ENCODE measurements at regions of chr12 and their contacts with region 1.

Region 1: GRCh38 chr12:54005853-54006686 is 2.7 kb upstream of the HOXC8 start:
- DNase-seq: peak; percentile 89
- H3K4me3 Mint-ChIP-seq: peak overlapping the region; percentile 68
- H3K27ac Mint-ChIP-seq: no peak overlapping the region
- H3K4me1 Mint-ChIP-seq: peaks cover 22% of the 10 kb centered on the region
- H3K27me3 Mint-ChIP-seq: peaks cover 91% of the 10 kb centered on the region

Region 2: DNA sequence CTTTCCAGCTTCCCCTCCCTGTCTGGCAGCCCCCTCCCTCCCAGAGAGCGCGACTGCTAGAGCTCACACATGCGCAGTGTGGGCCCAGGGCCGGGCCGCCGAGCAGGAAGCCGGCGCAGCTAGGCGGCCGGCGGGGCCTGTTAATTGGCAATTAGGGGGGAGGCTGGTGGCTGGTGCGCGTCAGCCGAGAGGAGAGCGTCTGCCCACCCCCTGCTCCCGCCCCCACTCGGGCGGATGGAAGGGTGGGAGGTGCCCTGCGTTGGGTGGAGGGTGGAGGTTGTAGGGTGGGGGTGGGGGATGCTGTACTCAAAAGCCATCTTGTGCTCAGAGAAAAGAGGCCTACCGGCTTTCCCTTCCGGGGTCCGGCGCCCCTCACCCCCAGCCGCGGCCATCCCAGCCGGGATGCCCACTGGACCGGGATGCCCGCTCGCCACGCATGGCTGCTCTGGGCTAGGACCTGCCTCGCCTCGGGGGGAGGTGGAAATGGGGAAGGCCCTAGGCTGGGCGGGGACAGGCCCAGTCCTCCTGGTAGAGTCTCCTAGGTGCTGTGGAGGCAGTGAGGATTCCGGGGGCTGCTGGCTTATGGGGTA is 11.9 kb after region 1 on chr12:
- CTCF ChIA-PET with region 1: interaction called, 11 read pairs
- POLR2A ChIA-PET with region 1: interaction called, 3 read pairs
- intact Hi-C with region 1: no loop called
- DNase-seq: peak; percentile 73
- H3K4me3 Mint-ChIP-seq: peak overlapping the region; percentile 72
- H3K27ac Mint-ChIP-seq: no peak overlapping the region
- H3K4me1 Mint-ChIP-seq: peaks cover 19% of the 10 kb centered on the region
- H3K27me3 Mint-ChIP-seq: peaks cover 69% of the 10 kb centered on the region

Region 3: DNA sequence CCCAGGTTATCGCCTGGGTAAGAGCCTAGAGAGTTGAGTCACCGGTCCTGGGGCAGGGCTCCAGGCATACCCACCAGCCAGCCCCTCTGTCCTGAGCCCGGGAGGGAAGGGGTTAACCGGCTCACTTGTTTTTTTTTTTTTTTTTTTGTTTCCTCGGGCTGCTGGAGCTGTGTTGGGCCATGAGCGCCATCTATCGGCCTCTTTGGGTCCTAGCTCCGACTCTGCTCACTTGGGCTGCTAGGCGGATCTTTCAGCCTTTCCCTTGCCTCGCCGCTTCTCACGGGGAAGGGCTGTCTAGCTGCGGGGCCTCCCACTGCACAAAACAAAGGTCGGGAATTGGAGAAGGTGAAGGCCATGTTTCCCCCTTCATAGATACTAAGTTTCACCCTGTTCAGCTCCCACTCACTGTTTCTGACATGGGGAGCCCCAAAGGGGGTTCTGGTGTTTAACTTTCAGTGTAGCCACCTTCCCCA is 185.5 kb after region 1 on chr12:
- CTCF ChIA-PET with region 1: interaction called, 127 read pairs
- POLR2A ChIA-PET with region 1: no interaction called
- intact Hi-C with region 1: loop called (anchors 1 kb)
- DNase-seq: peak; percentile 83
- H3K4me3 Mint-ChIP-seq: no peak overlapping the region
- H3K27ac Mint-ChIP-seq: no peak overlapping the region
- H3K4me1 Mint-ChIP-seq: peaks cover 17% of the 10 kb centered on the region
- H3K27me3 Mint-ChIP-seq: peaks cover 24% of the 10 kb centered on the region

Region 4: DNA sequence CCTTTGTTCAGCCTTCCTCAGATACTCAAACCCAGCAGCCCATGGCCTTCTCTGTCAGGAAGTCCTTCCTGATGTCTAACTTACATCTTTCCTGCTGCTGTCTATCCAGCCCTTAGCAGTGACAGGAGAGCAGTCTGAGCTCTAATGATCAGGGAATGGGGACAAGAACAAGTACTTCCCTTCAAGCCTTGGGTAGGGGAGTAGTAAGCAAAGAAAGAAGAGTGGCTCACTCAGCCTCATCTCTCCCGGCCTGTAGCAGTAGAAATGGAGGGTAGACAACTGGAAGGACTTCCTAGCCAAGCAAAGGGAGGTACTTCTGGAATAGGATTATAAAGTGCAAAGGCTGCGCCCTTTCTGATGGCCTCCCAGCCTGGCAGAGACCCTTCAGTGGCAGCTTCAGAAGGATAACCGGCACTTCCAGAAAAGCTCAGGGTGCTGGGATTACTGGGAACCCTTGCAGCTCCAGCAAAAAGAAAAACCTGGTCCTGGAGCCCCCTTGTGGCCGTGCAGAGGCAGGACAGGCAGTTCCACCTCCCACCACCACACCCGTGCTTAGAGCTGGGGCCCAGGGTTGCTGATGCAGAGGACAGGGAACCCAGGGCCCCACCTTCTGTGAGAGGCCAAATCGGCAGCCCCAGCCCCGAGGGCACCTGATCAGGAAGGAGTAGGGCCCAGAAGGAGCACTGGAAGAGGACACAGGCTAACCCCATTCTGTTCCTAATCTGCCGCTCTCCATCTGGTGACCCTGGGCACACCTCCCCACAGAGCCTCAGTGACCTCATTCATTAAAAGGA is 195.1 kb after region 1 on chr12:
- CTCF ChIA-PET with region 1: interaction called, 112 read pairs
- POLR2A ChIA-PET with region 1: no interaction called
- intact Hi-C with region 1: loop called (anchors 1 kb)
- DNase-seq: peak; percentile 77
- H3K4me3 Mint-ChIP-seq: no peak overlapping the region
- H3K27ac Mint-ChIP-seq: no peak overlapping the region
- H3K4me1 Mint-ChIP-seq: peaks cover 3% of the 10 kb centered on the region
- H3K27me3 Mint-ChIP-seq: peaks cover 48% of the 10 kb centered on the region

Region 5: DNA sequence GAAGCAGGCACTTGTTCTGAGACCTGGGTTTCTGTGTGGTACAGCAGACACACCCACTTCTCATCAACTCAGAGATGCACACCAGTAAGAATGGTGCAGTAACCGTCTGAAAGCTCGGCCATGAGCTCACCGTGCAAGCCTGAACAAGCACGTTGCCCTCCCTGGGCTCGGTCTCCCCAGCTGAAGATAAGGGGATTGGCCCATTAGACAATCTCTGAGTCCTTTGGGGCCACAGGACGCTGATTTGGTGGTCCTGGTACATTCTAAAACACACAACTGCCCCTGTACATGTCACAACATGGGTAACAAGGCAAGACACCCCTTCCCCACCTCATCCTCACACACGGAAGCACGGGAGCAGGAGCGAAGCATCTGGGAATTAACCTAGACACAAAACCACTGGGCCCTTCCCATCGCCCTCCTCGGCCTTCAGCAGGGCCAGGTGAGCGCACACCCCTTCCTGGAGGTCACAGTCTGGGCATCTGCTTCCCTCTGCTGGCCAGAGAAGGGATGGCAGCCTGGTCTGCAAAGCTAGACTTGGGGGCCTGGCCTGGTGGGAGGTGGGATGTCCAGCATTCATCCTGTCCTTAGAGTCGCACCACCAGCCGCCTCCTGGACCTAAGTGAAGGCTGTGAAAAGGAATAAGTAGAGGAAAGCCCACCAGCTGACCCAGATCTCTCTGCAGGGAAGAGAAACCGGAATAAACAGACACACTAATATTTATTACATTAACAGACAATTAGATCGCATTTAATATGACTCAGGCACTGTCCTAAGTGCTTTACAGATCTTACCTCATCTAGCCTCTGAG is 201.6 kb after region 1 on chr12:
- CTCF ChIA-PET with region 1: interaction called, 112 read pairs
- POLR2A ChIA-PET with region 1: no interaction called
- intact Hi-C with region 1: no loop called
- DNase-seq: peak; percentile 86
- H3K4me3 Mint-ChIP-seq: no peak overlapping the region
- H3K27ac Mint-ChIP-seq: no peak overlapping the region
- H3K4me1 Mint-ChIP-seq: no peaks in the 10 kb centered on the region
- H3K27me3 Mint-ChIP-seq: peaks cover 19% of the 10 kb centered on the region

Measured in activated CD4-positive, alpha-beta memory T cell treated with anti-CD3 and anti-CD28 coated beads for 36 hours (primary cell).